K562 (cell line): ENCODE measurements at regions of chr19 and their contacts with region 1.

Region 1: GRCh38 chr19:47225746-47226425 is 5.1 kb downstream of the BBC3 start:
- DNase-seq: peak; percentile 92 to 97 (median 92)
- ATAC-seq: peak; percentile 73
- H3K4me3 ChIP-seq: peak overlapping the region; percentile 100
- H3K27ac ChIP-seq: peak overlapping the region; percentile 93
- H3K4me1 ChIP-seq: peaks cover 16 to 67% of the 10 kb centered on the region in 2 experiments
- H3K27me3 ChIP-seq: no peaks in the 10 kb centered on the region
- CTCF ChIP-seq: peak in 2 of 3 experiments; percentile 49 to 57; a peak in 3 of 6 replicates
- EP300 ChIP-seq: peak; percentile 27
- POLR2A ChIP-seq: peak; percentile 96; the same call in 1 of the 2 replicates
- RAD21 ChIP-seq: peak in 1 of 2 experiments; percentile 11; a peak in 2 of 4 replicates

Region 2: DNA sequence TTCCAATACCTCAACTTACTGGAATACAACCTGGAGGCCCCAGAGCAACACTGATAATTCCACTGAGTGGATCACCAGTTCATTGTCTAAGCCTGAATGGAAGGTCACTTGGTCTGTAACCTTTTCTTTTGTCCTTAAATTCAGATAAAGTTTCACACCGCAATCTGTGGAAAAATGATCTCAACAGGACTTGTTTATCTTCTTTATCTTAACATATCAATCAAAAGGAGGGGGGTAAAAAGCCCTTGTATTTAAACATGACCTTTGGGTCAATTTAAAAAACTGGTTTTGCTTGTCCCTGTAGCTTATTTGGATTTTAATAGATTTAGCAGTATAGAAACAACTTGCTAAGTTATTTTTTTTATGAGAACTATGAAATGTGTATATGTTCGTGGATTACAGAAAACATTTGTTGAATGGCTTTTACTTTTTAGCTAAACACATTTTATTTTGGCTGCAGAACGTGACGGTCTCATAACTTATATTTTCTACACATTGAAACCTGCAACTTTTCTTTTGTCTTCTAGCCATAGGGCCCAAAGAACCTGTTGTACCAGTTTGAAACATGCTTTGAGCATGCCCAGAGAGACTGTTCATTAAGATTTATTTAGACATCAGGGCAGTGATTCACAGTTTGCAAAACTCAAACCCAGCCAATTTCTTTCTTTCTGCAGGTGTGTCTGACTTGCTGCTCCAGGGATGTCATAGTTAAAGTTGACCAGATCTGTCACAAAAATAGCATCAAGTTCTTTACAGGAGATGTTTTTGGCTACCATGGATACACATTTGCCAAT is 73.5 kb before region 1 on chr19:
- CTCF ChIA-PET with region 1: interaction called, 6 read pairs
- POLR2A ChIA-PET with region 1: interaction called, 8 read pairs
- in situ Hi-C with region 1: no loop called
- intact Hi-C with region 1: loop called (anchors 5 kb)
- DNase-seq: no peak
- ATAC-seq: no peak
- H3K4me3 ChIP-seq: no peak overlapping the region
- H3K27ac ChIP-seq: peak overlapping the region; percentile 10; the same call in 1 of the 3 replicates
- H3K4me1 ChIP-seq: peaks cover 2 to 10% of the 10 kb centered on the region in 2 experiments; a peak in 3 of 5 replicates
- H3K27me3 ChIP-seq: no peaks in the 10 kb centered on the region
- CTCF ChIP-seq: no peak
- EP300 ChIP-seq: no peak
- POLR2A ChIP-seq: no peak
- RAD21 ChIP-seq: no peak

Region 3: GRCh38 chr19:47210689-47211316 is 15.1 kb before region 1 on chr19:
- CTCF ChIA-PET with region 1: no interaction called
- POLR2A ChIA-PET with region 1: interaction called, 171 read pairs
- in situ Hi-C with region 1: no loop called
- intact Hi-C with region 1: loop called (anchors 1 kb)
- DNase-seq: peak; percentile 66 to 90 (median 72)
- ATAC-seq: peak; percentile 77
- H3K4me3 ChIP-seq: no peak overlapping the region
- H3K27ac ChIP-seq: peak overlapping the region; percentile 77
- H3K4me1 ChIP-seq: peaks cover 12 to 13% of the 10 kb centered on the region in 2 experiments; a peak in 4 of 5 replicates
- H3K27me3 ChIP-seq: no peaks in the 10 kb centered on the region
- CTCF ChIP-seq: peak; percentile 83 to 92 (median 85)
- EP300 ChIP-seq: peak; percentile 65
- POLR2A ChIP-seq: no peak
- RAD21 ChIP-seq: peak; percentile 80 to 82

Region 4: GRCh38 chr19:47256688-47257443 is 31.0 kb after region 1 on chr19:
- CTCF ChIA-PET with region 1: no interaction called
- POLR2A ChIA-PET with region 1: interaction called, 15 read pairs
- in situ Hi-C with region 1: no loop called
- intact Hi-C with region 1: no loop called
- DNase-seq: peak; percentile 96 to 99 (median 97)
- ATAC-seq: peak; percentile 89
- H3K4me3 ChIP-seq: peak overlapping the region; percentile 53
- H3K27ac ChIP-seq: peak overlapping the region; percentile 96
- H3K4me1 ChIP-seq: peaks cover 8 to 29% of the 10 kb centered on the region in 2 experiments; a peak in 4 of 5 replicates
- H3K27me3 ChIP-seq: no peaks in the 10 kb centered on the region
- CTCF ChIP-seq: no peak
- EP300 ChIP-seq: no peak; the same call in 1 of the 2 replicates
- POLR2A ChIP-seq: no peak
- RAD21 ChIP-seq: no peak

Region 5: GRCh38 chr19:47273313-47273977 is 47.6 kb after region 1 on chr19:
- CTCF ChIA-PET with region 1: no interaction called
- POLR2A ChIA-PET with region 1: interaction called, 25 read pairs
- in situ Hi-C with region 1: no loop called
- intact Hi-C with region 1: no loop called
- DNase-seq: peak; percentile 85 to 97 (median 89)
- ATAC-seq: peak; percentile 85
- H3K4me3 ChIP-seq: peak overlapping the region; percentile 74
- H3K27ac ChIP-seq: peak overlapping the region; percentile 95
- H3K4me1 ChIP-seq: peaks cover 33 to 67% of the 10 kb centered on the region in 2 experiments
- H3K27me3 ChIP-seq: no peaks in the 10 kb centered on the region
- CTCF ChIP-seq: no peak
- EP300 ChIP-seq: no peak
- POLR2A ChIP-seq: peak; percentile 92
- RAD21 ChIP-seq: no peak